ENCODE measurements at regions of chr1 and their contacts with region 1.

Region 1: DNA sequence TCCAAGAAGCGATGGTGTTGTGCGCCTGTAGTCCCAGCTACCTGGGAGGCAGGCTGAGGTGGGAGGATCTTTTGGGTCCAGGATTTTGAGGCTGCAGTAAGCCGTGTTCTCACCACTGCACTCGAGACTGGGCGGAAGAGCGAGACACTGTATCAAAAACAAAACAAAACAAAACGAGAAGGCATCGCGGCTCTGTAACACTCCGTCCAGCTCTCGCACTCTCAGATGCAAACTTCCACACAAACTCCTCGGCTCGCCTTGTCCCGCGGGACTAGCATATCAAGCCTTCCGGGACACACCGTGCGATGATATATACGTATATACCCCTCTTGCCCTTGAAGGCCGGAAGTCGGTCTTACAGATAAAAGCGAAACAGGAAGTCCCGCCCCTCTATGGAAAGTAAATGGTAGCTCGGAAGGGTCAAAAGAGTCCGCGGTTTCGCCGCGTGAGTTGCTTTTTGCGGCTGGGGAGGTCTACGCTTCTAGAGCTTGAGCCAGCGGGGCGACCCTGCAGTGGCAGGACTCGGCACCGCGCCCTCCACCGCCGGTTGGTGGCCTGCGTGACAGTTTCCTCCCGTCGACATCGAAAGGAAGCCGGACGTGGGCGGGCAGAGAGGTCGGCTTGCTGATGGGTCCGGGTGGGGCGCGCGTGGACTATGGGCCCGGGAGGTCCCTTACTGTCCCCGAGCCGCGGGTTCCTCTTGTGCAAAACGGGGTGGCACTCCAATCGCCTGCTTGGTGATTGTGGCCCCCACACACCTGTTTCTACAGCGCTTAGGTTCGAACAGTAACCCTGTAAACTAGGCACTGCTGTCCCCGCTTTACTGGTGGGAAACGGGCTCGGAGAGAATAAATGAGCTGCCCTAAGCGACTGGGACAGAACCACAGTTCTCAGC is at the start of gene COA6:
- DNase-seq: peak; percentile 78 to 96 (median 86)
- ATAC-seq: peak; percentile 79
- H3K4me3 ChIP-seq: peak within 1 kb of the TSS; percentile 79
- H3K4me3 Mint-ChIP-seq: peak within 1 kb of the TSS; percentile 97
- H3K27ac ChIP-seq: peak within 1 kb of the TSS; percentile 95 to 98
- H3K27ac Mint-ChIP-seq: peak within 1 kb of the TSS; percentile 99
- H3K4me1 ChIP-seq: peaks cover 36% of the 10 kb centered on the region
- H3K4me1 Mint-ChIP-seq: peaks cover 66% of the 10 kb centered on the region
- H3K27me3 ChIP-seq: no peaks in the 10 kb centered on the region
- H3K27me3 Mint-ChIP-seq: no peaks in the 10 kb centered on the region
- CTCF ChIP-seq: no peak
- total RNA-seq, gene COA6: 10.0 to 12.2 TPM

Region 2: DNA sequence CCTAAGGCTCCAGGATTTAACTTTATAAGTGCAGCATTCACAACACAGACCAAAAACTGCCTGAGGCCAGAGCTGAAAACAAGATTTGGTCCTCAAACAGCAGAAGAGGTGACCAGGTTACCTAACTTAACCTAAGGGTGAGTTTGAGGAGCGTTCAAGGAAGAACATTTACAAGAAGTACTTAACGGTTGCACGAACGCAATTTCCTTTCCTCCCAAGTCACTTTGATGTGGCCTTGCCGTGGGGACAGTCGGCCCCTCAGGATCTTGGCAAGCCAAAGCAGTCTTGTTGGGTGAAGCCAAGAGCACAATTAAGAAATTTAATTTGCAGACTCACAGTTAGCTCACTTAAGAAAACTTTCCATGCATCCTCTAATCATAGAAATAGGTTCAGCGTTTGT is 202.7 kb before region 1 on chr1:
- CTCF ChIA-PET with region 1: no interaction called
- POLR2A ChIA-PET with region 1: no interaction called
- intact Hi-C with region 1: no loop called
- DNase-seq: peak in 2 of 14 experiments; percentile 7 to 13
- ATAC-seq: no peak
- H3K4me3 ChIP-seq: no peak overlapping the region
- H3K4me3 Mint-ChIP-seq: no peak overlapping the region
- H3K27ac ChIP-seq: no peak overlapping the region
- H3K27ac Mint-ChIP-seq: no peak overlapping the region
- H3K4me1 ChIP-seq: peaks cover 15% of the 10 kb centered on the region
- H3K4me1 Mint-ChIP-seq: peaks cover 13% of the 10 kb centered on the region
- H3K27me3 ChIP-seq: no peaks in the 10 kb centered on the region
- H3K27me3 Mint-ChIP-seq: no peaks in the 10 kb centered on the region
- CTCF ChIP-seq: no peak

Region 3: DNA sequence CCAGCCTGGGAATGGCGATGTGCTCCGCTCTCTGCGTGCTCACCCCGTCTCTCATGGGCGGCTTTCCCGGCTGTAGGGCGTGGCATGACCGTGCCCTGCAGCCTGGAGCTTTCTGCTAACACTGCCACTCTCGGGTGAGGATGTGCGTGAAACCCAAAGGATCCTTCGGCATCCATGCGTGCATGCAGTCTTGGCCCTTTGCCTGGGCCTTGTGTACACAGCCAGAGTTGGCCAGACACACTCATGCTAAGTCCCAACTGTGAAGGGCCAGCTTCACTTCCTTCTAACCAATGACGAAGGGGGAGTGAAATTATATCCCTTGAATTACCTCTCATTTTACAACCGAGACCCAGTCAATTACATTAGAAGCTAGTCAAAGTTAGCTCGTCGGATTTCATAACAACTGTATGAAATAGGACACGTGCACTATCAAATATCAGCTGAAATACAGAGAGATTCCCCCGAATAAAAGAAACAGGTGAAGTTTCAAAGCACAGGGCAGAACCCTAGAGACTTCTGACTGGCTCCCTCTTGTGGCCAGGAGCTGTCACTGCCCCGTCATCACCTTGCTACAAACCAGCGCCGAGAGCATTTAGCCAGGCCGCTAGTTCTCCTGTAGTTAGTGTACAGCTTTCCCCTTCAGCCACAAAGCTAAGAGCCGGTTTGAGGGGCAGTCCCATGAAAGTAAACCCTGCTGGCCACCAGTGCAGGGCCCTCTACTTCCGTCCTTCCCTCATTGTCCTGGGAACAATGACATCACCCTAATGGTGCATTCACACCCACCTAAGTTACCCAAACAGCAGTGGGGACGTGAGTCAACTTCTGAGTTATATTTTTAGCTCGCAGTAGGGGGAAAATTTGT is 63.5 kb before region 1 on chr1:
- CTCF ChIA-PET with region 1: interaction called, 4 read pairs
- POLR2A ChIA-PET with region 1: interaction called, 15 read pairs
- intact Hi-C with region 1: no loop called
- DNase-seq: peak; percentile 55 to 89 (median 69)
- ATAC-seq: peak; percentile 96
- H3K4me3 ChIP-seq: no peak overlapping the region
- H3K4me3 Mint-ChIP-seq: no peak overlapping the region
- H3K27ac ChIP-seq: no peak overlapping the region
- H3K27ac Mint-ChIP-seq: peak overlapping the region; percentile 43
- H3K4me1 ChIP-seq: peaks cover 38% of the 10 kb centered on the region
- H3K4me1 Mint-ChIP-seq: peaks cover 18% of the 10 kb centered on the region
- H3K27me3 ChIP-seq: no peaks in the 10 kb centered on the region
- H3K27me3 Mint-ChIP-seq: no peaks in the 10 kb centered on the region
- CTCF ChIP-seq: peak; percentile 95

Region 4: GRCh38 chr1:234326497-234327366 is 46.6 kb before region 1 on chr1:
- CTCF ChIA-PET with region 1: interaction called, 19 read pairs
- POLR2A ChIA-PET with region 1: interaction called, 23 read pairs
- intact Hi-C with region 1: loop called (anchors 2 to 5 kb)
- DNase-seq: peak; percentile 45 to 86 (median 71)
- ATAC-seq: peak; percentile 91
- H3K4me3 ChIP-seq: peak overlapping the region; percentile 73
- H3K4me3 Mint-ChIP-seq: peak overlapping the region; percentile 93
- H3K27ac ChIP-seq: peak overlapping the region; percentile 24 to 72
- H3K27ac Mint-ChIP-seq: peak overlapping the region; percentile 85
- H3K4me1 ChIP-seq: peaks cover 12% of the 10 kb centered on the region
- H3K4me1 Mint-ChIP-seq: peaks cover 25% of the 10 kb centered on the region
- H3K27me3 ChIP-seq: peaks cover 0 to 6% of the 10 kb centered on the region in 2 experiments
- H3K27me3 Mint-ChIP-seq: peaks cover 14% of the 10 kb centered on the region
- CTCF ChIP-seq: peak; percentile 87

Region 5: DNA sequence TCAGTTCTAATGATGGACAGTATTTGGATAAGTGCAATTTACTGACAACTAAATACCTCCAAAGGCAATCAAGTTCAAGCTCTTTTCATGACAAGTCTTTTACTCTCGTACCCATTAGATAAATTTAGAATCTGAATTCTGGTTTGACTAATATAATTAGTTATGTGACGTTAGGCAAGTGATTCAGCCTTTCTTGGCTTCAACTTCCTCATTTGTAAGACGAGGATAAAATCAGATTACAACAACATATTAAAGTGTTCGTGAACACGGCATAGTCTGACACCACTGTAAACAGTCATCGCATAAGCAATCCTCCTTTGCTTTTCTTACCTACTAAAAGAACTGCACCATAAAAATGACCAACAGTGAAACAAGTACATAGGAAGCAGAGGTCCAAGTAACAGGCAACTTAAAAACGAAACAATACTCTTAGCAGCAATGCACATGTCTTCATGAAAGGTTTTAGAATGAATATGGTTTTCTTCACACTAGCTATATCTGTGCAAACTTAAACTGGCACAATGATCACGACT is 25.6 kb after region 1 on chr1:
- CTCF ChIA-PET with region 1: interaction called, 3 read pairs
- POLR2A ChIA-PET with region 1: interaction called, 16 read pairs
- intact Hi-C with region 1: no loop called
- DNase-seq: peak in 2 of 14 experiments; percentile 37 to 44
- ATAC-seq: peak; percentile 7
- H3K4me3 ChIP-seq: peak overlapping the region; percentile 29
- H3K4me3 Mint-ChIP-seq: peak overlapping the region; percentile 85
- H3K27ac ChIP-seq: peak overlapping the region in 1 of 2 donors; percentile 7
- H3K27ac Mint-ChIP-seq: peak overlapping the region; percentile 92
- H3K4me1 ChIP-seq: peaks cover 14% of the 10 kb centered on the region
- H3K4me1 Mint-ChIP-seq: peaks cover 66% of the 10 kb centered on the region
- H3K27me3 ChIP-seq: no peaks in the 10 kb centered on the region
- H3K27me3 Mint-ChIP-seq: no peaks in the 10 kb centered on the region
- CTCF ChIP-seq: no peak

Region 6: GRCh38 chr1:234478481-234479309 is 105.4 kb after region 1 on chr1 and contains the start of gene TARBP1:
- CTCF ChIA-PET with region 1: no interaction called
- POLR2A ChIA-PET with region 1: interaction called, 34 read pairs
- intact Hi-C with region 1: loop called (anchors 10 kb)
- DNase-seq: peak; percentile 46 to 92 (median 68)
- ATAC-seq: peak; percentile 69
- H3K4me3 ChIP-seq: peak within 1 kb of the TSS; percentile 64
- H3K4me3 Mint-ChIP-seq: peak within 1 kb of the TSS; percentile 90
- H3K27ac ChIP-seq: peak within 1 kb of the TSS in 1 of 2 donors; percentile 50
- H3K27ac Mint-ChIP-seq: peak within 1 kb of the TSS; percentile 92
- H3K4me1 ChIP-seq: peaks cover 19% of the 10 kb centered on the region
- H3K4me1 Mint-ChIP-seq: peaks cover 44% of the 10 kb centered on the region
- H3K27me3 ChIP-seq: no peaks in the 10 kb centered on the region
- H3K27me3 Mint-ChIP-seq: no peaks in the 10 kb centered on the region
- CTCF ChIP-seq: no peak
- total RNA-seq, gene TARBP1: 38.4 to 40.9 TPM

Region 7: DNA sequence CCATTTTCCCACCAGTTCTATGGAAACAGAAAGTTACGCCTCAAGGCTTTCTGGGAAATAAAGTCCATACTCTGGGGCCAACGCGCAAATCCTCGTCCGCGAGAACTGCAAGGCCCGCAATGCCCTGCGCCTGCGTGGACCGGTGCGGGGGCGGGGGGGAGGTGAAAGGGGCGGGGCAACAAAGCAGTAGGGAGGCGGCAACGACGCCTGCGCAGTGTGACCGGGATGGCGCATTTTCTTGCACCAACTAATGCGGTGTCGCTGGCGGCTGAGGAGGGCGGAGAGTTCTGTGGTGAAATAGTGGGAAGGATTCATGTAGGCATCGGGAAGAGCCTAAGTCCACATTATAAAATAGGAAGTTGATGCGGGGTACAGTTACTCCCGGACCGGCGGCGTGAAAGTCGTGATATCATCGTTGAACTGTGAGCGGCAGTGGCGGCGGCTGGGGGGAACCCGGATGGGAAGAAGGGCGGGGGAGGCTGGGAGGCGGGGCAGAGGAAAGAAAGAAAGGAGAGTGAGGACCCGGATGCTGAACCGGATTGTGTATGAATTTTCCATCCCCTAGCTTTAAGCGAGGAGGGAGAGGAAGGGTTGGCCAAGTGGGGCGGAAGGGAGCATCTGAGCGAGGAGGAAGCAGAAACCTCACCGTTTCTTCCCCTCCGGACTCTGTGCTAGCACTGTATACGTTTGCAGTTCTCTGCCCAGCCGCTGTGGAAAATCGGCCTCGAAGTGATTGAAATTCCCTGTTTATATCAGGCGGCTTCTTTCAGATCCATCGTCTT is 955.2 kb after region 1 on chr1 and contains the start of gene GGPS1:
- CTCF ChIA-PET with region 1: no interaction called
- POLR2A ChIA-PET with region 1: no interaction called
- intact Hi-C with region 1: loop called in 1 of 2 experiments (anchors 10 kb)
- DNase-seq: peak; percentile 96 to 100 (median 99)
- ATAC-seq: peak; percentile 78
- H3K4me3 ChIP-seq: peak within 1 kb of the TSS; percentile 97
- H3K4me3 Mint-ChIP-seq: no peak within 1 kb of the TSS
- H3K27ac ChIP-seq: peak within 1 kb of the TSS; percentile 96 to 98
- H3K27ac Mint-ChIP-seq: no peak within 1 kb of the TSS
- H3K4me1 ChIP-seq: peaks cover 16% of the 10 kb centered on the region
- H3K4me1 Mint-ChIP-seq: peaks cover 23% of the 10 kb centered on the region
- H3K27me3 ChIP-seq: no peaks in the 10 kb centered on the region
- H3K27me3 Mint-ChIP-seq: no peaks in the 10 kb centered on the region
- CTCF ChIP-seq: peak; percentile 34
- total RNA-seq, gene GGPS1: 20.6 to 20.9 TPM